Left cardiac atrium (tissue), 4 donors: ENCODE measurements at regions of chr2 and their contacts with region 1.

Region 1: GRCh38 chr2:108575132-108575966 is 41.1 kb downstream of the LIMS1 start:
- DNase-seq: no peak
- ATAC-seq: no peak

Region 2: DNA sequence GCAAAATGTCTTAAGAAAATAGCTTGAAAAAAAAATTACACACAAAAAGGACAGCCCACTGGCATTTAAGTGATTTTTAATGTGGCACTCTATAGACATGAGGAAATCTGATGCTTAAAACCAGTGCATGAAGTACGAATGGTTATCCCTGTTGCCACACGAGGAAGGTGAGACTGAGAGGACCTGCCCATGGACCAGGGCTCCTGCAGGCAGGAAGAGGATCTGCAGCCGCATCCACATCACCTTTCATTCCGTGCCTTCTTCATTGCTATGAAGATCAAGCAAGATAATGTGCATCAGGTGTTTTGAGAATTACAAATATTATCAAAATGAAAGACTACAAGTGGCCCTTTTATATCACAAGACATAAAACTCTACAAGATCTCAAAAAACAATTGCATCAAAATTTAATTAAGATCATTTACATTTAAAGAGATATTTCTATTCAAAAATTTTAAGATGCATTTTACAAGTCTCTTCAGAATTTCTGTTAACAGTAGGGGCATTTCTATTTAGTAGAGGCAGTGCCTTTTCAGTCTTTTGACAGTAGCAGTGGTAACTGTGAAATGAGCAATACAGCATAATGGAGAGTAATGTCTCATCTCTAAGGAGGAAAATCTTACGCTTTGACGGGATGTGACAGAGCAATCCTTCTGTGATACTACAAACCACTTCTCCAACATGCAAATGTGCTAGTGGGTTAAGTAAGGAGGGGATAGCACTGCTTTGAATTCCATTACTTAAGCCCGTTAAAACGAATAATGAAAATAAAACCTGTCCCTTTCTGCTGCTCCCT is 505.6 kb before region 1 on chr2:
- intact Hi-C with region 1: no loop called
- DNase-seq: no peak
- ATAC-seq: no peak

Region 3: DNA sequence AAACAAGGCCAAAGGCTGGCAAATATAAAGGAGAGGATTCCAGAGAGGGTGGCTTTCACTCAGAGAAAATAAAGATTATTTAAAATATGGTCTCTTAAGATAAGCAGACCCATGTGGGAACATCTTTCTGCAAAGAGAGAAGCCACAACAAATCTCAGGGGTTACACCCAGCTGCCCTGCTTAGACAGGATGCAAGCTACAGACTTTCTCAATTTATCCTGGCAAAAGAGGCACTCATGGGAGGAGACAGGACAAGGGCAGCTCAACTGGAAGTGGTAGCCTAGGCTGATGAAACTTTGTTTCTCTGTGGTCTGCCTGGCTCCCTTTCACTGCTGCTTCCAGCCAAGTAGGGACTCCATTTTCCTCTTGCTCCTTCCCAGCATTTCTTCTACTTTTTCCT is 223.5 kb before region 1 on chr2:
- intact Hi-C with region 1: loop called (anchors 2 to 5 kb)
- DNase-seq: no peak
- ATAC-seq: peak; percentile 51 to 81

Region 4: GRCh38 chr2:108542071-108542470 is 33.3 kb before region 1 on chr2:
- intact Hi-C with region 1: loop called (anchors 5 to 10 kb)
- DNase-seq: no peak
- ATAC-seq: peak; percentile 34 to 49